Esophagus muscularis mucosa (tissue), 4 donors: ENCODE measurements at regions of chrX and their contacts with region 1.

Region 1: GRCh38 chrX:50691820-50692219 is 122.2 kb downstream of the SHROOM4 start:
- DNase-seq: no peak
- H3K4me3 ChIP-seq: no peak overlapping the region
- H3K27ac ChIP-seq: no peak overlapping the region
- H3K4me1 ChIP-seq: no peaks in the 10 kb centered on the region
- H3K27me3 ChIP-seq: no peaks in the 10 kb centered on the region
- CTCF ChIP-seq: peak; percentile 53 to 58 (median 54)
- EP300 ChIP-seq: no peak
- POLR2A ChIP-seq: no peak

Region 2: DNA sequence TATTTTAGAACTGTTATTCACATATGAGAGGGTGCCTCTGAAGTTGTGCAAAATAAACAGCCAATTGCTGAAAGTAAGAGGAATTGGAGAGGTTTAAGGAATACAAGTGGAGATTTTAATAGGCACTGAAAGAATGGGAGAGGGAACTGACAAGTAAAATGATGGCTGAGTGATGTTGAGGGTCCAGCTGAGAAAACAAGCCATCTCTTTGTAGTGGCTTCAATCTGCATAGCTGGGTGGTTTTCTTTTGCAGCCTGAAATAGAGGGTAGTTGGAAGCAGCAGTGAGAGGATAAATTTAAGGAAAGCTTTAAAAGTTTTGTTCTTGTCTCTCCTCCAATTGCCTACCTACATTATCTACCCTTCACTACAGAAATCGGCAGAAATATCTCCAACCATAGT is 114.5 kb before region 1 on chrX:
- intact Hi-C with region 1: no loop called
- DNase-seq: no peak
- H3K4me3 ChIP-seq: no peak overlapping the region
- H3K27ac ChIP-seq: no peak overlapping the region
- H3K4me1 ChIP-seq: no peaks in the 10 kb centered on the region
- H3K27me3 ChIP-seq: no peaks in the 10 kb centered on the region
- CTCF ChIP-seq: no peak
- EP300 ChIP-seq: no peak
- POLR2A ChIP-seq: no peak

Region 3: GRCh38 chrX:50905334-50905733 is 213.5 kb after region 1 on chrX:
- intact Hi-C with region 1: loop called (anchors 5 kb)
- DNase-seq: no peak
- H3K4me3 ChIP-seq: no peak overlapping the region
- H3K27ac ChIP-seq: no peak overlapping the region
- H3K4me1 ChIP-seq: no peaks in the 10 kb centered on the region
- H3K27me3 ChIP-seq: peaks cover 0 to 11% (median 0%) of the 10 kb centered on the region in 4 donors
- CTCF ChIP-seq: no peak
- EP300 ChIP-seq: no peak
- POLR2A ChIP-seq: no peak

Region 4: GRCh38 chrX:50988649-50989048 is 296.8 kb after region 1 on chrX:
- intact Hi-C with region 1: loop called (anchors 5 kb)
- DNase-seq: no peak
- H3K4me3 ChIP-seq: no peak overlapping the region
- H3K27ac ChIP-seq: no peak overlapping the region
- H3K4me1 ChIP-seq: no peaks in the 10 kb centered on the region
- H3K27me3 ChIP-seq: peaks cover 0 to 5% (median 0%) of the 10 kb centered on the region in 4 donors
- CTCF ChIP-seq: peak; percentile 42 to 47 (median 44)
- EP300 ChIP-seq: no peak
- POLR2A ChIP-seq: no peak